HEK293 (cell line): ENCODE measurements at regions of chr6 and their contacts with region 1.

Region 1: GRCh38 chr6:2848851-2849250 is 7.2 kb upstream of the SERPINB1 start:
- H3K4me3 ChIP-seq: no peak overlapping the region
- H3K27ac ChIP-seq: no peak overlapping the region
- H3K4me1 ChIP-seq: peaks cover 6% of the 10 kb centered on the region; the same call in 1 of the 2 replicates
- CTCF ChIP-seq: no peak

Region 2: DNA sequence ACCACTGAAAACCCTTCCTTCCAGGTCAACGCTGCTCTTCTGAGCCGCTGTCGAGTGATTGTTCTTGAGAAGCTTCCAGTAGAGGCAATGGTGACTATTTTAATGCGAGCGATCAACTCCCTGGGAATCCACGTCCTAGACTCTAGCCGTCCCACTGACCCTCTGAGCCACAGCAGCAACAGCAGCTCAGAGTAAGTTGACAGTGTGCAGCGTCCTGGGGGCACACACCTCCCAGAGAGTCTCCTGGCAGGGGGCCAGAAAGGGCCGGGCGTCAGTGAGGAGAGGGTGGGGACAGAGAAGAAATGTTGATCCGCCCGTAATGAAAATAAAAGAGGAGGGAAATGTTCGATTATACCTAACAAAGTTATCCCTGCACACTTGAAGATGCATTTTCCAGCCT is 78.7 kb before region 1 on chr6:
- CTCF ChIA-PET with region 1: interaction called, 15 read pairs
- POLR2A ChIA-PET with region 1: no interaction called
- H3K4me3 ChIP-seq: peak overlapping the region; percentile 15
- H3K27ac ChIP-seq: no peak overlapping the region
- H3K4me1 ChIP-seq: peaks cover 24% of the 10 kb centered on the region
- CTCF ChIP-seq: no peak

Region 3: GRCh38 chr6:2866181-2866846 is 17.5 kb after region 1 on chr6:
- CTCF ChIA-PET with region 1: interaction called, 20 read pairs
- POLR2A ChIA-PET with region 1: no interaction called
- H3K4me3 ChIP-seq: no peak overlapping the region
- H3K27ac ChIP-seq: no peak overlapping the region
- H3K4me1 ChIP-seq: no peaks in the 10 kb centered on the region
- CTCF ChIP-seq: no peak

Region 4: DNA sequence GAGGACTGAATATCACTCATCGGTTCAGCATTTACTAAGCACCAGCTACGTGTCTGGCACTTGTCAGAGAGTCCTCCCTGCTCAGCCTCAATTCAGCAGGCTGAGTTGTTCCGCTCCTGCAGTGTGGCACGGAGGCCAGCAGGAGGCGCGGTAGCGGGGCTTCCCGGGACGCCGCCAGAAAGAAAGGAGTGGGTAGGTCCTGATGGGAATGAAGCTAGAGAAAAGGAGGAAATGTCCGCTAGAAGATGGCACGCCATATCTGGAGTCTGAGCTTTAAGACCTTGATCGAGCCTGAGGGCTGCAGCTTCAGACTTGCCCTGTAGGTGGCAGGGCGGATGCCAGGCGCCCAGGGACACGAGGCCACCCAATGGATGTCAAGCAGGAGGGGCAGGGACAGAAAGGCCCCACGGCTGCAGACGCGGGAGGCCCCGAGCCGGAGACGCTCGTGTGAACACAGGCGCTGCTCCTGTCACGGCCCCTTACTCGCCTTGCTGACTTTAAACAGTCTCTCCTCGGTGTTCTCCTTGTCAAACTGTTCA is 103.8 kb after region 1 on chr6:
- CTCF ChIA-PET with region 1: interaction called, 19 read pairs
- POLR2A ChIA-PET with region 1: no interaction called
- H3K4me3 ChIP-seq: no peak overlapping the region
- H3K27ac ChIP-seq: no peak overlapping the region
- H3K4me1 ChIP-seq: no peaks in the 10 kb centered on the region
- CTCF ChIP-seq: peak; percentile 74

Region 5: DNA sequence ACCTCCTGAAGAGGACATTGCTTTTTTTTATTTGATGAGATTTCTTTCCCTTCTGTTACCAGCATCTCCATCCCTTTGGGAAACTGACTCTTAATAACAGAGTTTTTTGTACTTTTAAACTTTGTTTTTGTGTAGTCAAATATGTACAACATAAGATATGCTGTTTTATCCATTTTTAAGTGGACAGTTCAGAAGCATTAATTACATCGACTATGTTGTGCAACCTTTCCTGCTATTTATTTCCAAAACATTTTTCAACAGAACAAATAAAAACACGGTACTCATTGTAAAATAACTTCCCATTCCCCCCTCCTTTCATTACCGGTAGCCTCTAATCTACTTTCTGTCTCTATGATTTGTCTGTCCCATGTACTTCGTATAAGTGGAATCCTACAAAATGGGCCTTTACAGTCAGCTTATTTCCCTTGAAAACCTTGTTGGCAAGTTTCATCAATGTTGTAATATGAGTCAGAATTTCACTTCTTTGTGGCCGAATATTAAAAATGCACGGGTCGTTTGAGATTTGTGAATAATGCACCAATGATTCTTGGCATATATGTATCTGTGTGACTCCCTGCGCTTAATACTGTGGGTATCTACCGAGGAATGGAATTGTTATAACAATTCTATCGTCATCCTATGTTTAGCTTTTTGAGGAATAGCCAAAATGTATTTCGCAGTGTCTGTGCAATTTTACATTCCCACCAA is 208.4 kb after region 1 on chr6:
- CTCF ChIA-PET with region 1: interaction called, 15 read pairs
- POLR2A ChIA-PET with region 1: no interaction called
- H3K4me3 ChIP-seq: no peak overlapping the region
- H3K27ac ChIP-seq: no peak overlapping the region
- H3K4me1 ChIP-seq: no peaks in the 10 kb centered on the region
- CTCF ChIP-seq: no peak